ENCODE measurements at regions of chr7 and their contacts with region 1.

Region 1: GRCh38 chr7:6516387-6516983 is 34.8 kb downstream of the GRID2IP start:
- DNase-seq: peak; percentile 8
- ATAC-seq: peak; percentile 93
- H3K4me3 ChIP-seq: peak overlapping the region; percentile 25; the same call in 1 of the 2 replicates
- H3K27ac ChIP-seq: no peak overlapping the region
- H3K4me1 ChIP-seq: peaks cover 3% of the 10 kb centered on the region; the same call in 1 of the 2 replicates
- H3K27me3 ChIP-seq: no peaks in the 10 kb centered on the region
- CTCF ChIP-seq: peak; percentile 72 to 93 (median 85)
- EP300 ChIP-seq: no peak
- POLR2A ChIP-seq: no peak
- RAD21 ChIP-seq: peak; percentile 81

Region 2: GRCh38 chr7:5854738-5855137 is 661.7 kb before region 1 on chr7:
- CTCF ChIA-PET with region 1: interaction called, 32 read pairs
- POLR2A ChIA-PET with region 1: no interaction called
- RAD21 ChIA-PET with region 1: interaction called, 4 read pairs
- SMC1A ChIA-PET with region 1: interaction called, 14 read pairs
- in situ Hi-C with region 1: loop called (anchors 5 kb)
- intact Hi-C with region 1: loop called (anchors 5 kb)
- DNase-seq: no peak
- ATAC-seq: no peak
- H3K4me3 ChIP-seq: no peak overlapping the region
- H3K27ac ChIP-seq: no peak overlapping the region
- H3K4me1 ChIP-seq: no peaks in the 10 kb centered on the region
- H3K27me3 ChIP-seq: no peaks in the 10 kb centered on the region
- CTCF ChIP-seq: no peak
- EP300 ChIP-seq: no peak
- POLR2A ChIP-seq: no peak
- RAD21 ChIP-seq: no peak

Region 3: GRCh38 chr7:6558837-6559236 is 42.4 kb after region 1 on chr7:
- CTCF ChIA-PET with region 1: interaction called, 20 read pairs
- POLR2A ChIA-PET with region 1: interaction called, 3 read pairs
- RAD21 ChIA-PET with region 1: interaction called, 5 read pairs
- SMC1A ChIA-PET with region 1: no interaction called
- in situ Hi-C with region 1: no loop called
- intact Hi-C with region 1: no loop called
- DNase-seq: no peak
- ATAC-seq: peak; percentile 60; the same call in 2 of the 3 replicates
- H3K4me3 ChIP-seq: no peak overlapping the region
- H3K27ac ChIP-seq: no peak overlapping the region
- H3K4me1 ChIP-seq: no peaks in the 10 kb centered on the region
- H3K27me3 ChIP-seq: no peaks in the 10 kb centered on the region
- CTCF ChIP-seq: peak; percentile 43 to 62 (median 49)
- EP300 ChIP-seq: no peak
- POLR2A ChIP-seq: no peak
- RAD21 ChIP-seq: peak; percentile 67

Region 4: GRCh38 chr7:6577365-6578113 is 61.1 kb after region 1 on chr7 and contains the start of gene ZDHHC4:
- CTCF ChIA-PET with region 1: interaction called, 38 read pairs
- POLR2A ChIA-PET with region 1: no interaction called
- RAD21 ChIA-PET with region 1: interaction called, 16 read pairs
- SMC1A ChIA-PET with region 1: interaction called, 15 read pairs
- in situ Hi-C with region 1: no loop called
- intact Hi-C with region 1: loop called (anchors 5 kb)
- DNase-seq: peak; percentile 61
- ATAC-seq: peak; percentile 95
- H3K4me3 ChIP-seq: peak within 1 kb of the TSS; percentile 98
- H3K27ac ChIP-seq: peak within 1 kb of the TSS; percentile 75
- H3K4me1 ChIP-seq: peaks cover 29% of the 10 kb centered on the region
- H3K27me3 ChIP-seq: no peaks in the 10 kb centered on the region
- CTCF ChIP-seq: no peak
- EP300 ChIP-seq: no peak; a peak in 1 of 4 replicates
- POLR2A ChIP-seq: peak; percentile 96
- RAD21 ChIP-seq: no peak
- polyA plus RNA-seq, gene ZDHHC4: 34.5 to 37.9 TPM

Region 5: GRCh38 chr7:6934986-6935385 is 418.5 kb after region 1 on chr7:
- CTCF ChIA-PET with region 1: interaction called, 4 read pairs
- POLR2A ChIA-PET with region 1: no interaction called
- RAD21 ChIA-PET with region 1: interaction called, 4 read pairs
- SMC1A ChIA-PET with region 1: no interaction called
- in situ Hi-C with region 1: no loop called
- intact Hi-C with region 1: loop called (anchors 2 kb)
- DNase-seq: no peak
- ATAC-seq: no peak
- H3K4me3 ChIP-seq: no peak overlapping the region
- H3K27ac ChIP-seq: no peak overlapping the region
- H3K4me1 ChIP-seq: no peaks in the 10 kb centered on the region
- H3K27me3 ChIP-seq: no peaks in the 10 kb centered on the region
- CTCF ChIP-seq: no peak
- EP300 ChIP-seq: no peak
- POLR2A ChIP-seq: no peak
- RAD21 ChIP-seq: no peak

Measured in GM12878 (cell line).